ENCODE measurements at regions of chr9 and their contacts with region 1.

Region 1: GRCh38 chr9:126704873-126705766 is 91.4 kb downstream of the LMX1B start:
- DNase-seq: peak; percentile 82 to 89 (median 86)
- ATAC-seq: peak; percentile 82
- H3K4me3 ChIP-seq: no peak overlapping the region; the same call in 1 of the 2 replicates
- H3K27ac ChIP-seq: no peak overlapping the region
- H3K4me1 ChIP-seq: peaks cover 16 to 31% of the 10 kb centered on the region in 2 experiments; a peak in 4 of 5 replicates
- H3K27me3 ChIP-seq: peaks cover 4 to 26% of the 10 kb centered on the region in 2 experiments; a peak in 2 of 5 replicates
- CTCF ChIP-seq: peak; percentile 80 to 90 (median 87)
- EP300 ChIP-seq: no peak
- POLR2A ChIP-seq: no peak
- RAD21 ChIP-seq: peak; percentile 57 to 74

Region 2: DNA sequence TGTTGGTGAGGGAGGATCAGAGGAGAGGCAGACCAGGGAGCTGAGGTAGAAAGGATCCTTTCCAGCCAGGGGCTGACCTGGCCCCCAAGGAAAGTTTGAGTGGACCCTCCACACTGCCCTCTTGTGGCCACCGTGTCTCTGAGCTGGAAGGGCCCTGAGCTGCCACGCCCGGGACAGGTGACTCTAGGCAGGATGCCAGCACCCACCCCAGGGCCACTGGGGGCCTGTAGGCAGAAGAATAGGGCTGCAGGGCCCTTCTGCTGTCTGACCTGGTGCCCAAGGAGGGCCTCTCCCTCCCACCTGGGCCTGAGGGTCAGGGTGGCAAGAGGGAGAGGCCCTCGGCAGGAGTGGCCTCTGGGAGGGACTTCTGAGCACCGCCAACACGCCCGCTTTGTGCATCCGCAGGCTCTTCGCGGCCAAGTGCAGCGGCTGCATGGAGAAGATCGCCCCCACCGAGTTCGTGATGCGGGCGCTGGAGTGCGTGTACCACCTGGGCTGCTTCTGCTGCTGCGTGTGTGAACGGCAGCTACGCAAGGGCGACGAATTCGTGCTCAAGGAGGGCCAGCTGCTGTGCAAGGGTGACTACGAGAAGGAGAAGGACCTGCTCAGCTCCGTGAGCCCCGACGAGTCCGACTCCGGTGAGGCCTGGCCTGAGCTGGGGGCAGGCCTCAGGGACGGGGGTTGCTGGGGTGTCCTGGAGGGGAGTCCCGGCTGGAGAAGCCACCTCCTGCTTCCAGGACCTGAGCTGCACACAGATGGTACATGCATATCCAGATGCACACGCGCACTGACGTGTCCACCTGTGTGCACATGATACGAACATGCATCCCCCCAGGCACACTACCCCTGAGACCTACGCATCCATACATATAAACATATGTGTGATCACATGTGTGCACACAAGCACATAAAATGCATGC is 14.4 kb before region 1 on chr9:
- CTCF ChIA-PET with region 1: no interaction called
- POLR2A ChIA-PET with region 1: no interaction called
- in situ Hi-C with region 1: no loop called
- intact Hi-C with region 1: no loop called
- DNase-seq: peak; percentile 66 to 81 (median 80)
- ATAC-seq: peak; percentile 92
- H3K4me3 ChIP-seq: no peak overlapping the region
- H3K27ac ChIP-seq: no peak overlapping the region
- H3K4me1 ChIP-seq: peaks cover 0 to 14% of the 10 kb centered on the region in 2 experiments; a peak in 2 of 5 replicates
- H3K27me3 ChIP-seq: peaks cover 17 to 66% of the 10 kb centered on the region in 2 experiments; a peak in 4 of 5 replicates
- CTCF ChIP-seq: peak; percentile 64 to 78 (median 72)
- EP300 ChIP-seq: no peak
- POLR2A ChIP-seq: no peak
- RAD21 ChIP-seq: peak in 1 of 2 experiments; percentile 52; a peak in 2 of 4 replicates

Region 3: GRCh38 chr9:126773004-126773607 is 68.0 kb after region 1 on chr9:
- CTCF ChIA-PET with region 1: interaction called, 4 read pairs
- POLR2A ChIA-PET with region 1: interaction called, 3 read pairs
- in situ Hi-C with region 1: loop called (anchors 5 kb)
- intact Hi-C with region 1: no loop called
- DNase-seq: peak; percentile 38 to 52 (median 44)
- ATAC-seq: peak; percentile 86
- H3K4me3 ChIP-seq: no peak overlapping the region
- H3K27ac ChIP-seq: no peak overlapping the region
- H3K4me1 ChIP-seq: no peaks in the 10 kb centered on the region; a peak in 1 of 5 replicates
- H3K27me3 ChIP-seq: peaks cover 21 to 32% of the 10 kb centered on the region in 2 experiments
- CTCF ChIP-seq: peak; percentile 64 to 76 (median 67)
- EP300 ChIP-seq: no peak
- POLR2A ChIP-seq: no peak
- RAD21 ChIP-seq: peak; percentile 30 to 63

Region 4: GRCh38 chr9:127545196-127546124 is 840.3 kb after region 1 on chr9:
- CTCF ChIA-PET with region 1: no interaction called
- POLR2A ChIA-PET with region 1: no interaction called
- in situ Hi-C with region 1: no loop called
- intact Hi-C with region 1: no loop called
- DNase-seq: peak in 2 of 4 experiments; percentile 32 to 33
- ATAC-seq: no peak; the same call in 2 of the 3 replicates
- H3K4me3 ChIP-seq: no peak overlapping the region
- H3K27ac ChIP-seq: peak overlapping the region; percentile 71; the same call in 2 of the 3 replicates
- H3K4me1 ChIP-seq: peaks cover 27 to 50% of the 10 kb centered on the region in 2 experiments
- H3K27me3 ChIP-seq: no peaks in the 10 kb centered on the region
- CTCF ChIP-seq: no peak
- EP300 ChIP-seq: no peak
- POLR2A ChIP-seq: no peak
- RAD21 ChIP-seq: no peak

Measured in K562 (cell line).